Esophagus muscularis mucosa (tissue), 4 donors: ENCODE measurements at regions of chr3 and their contacts with region 1.

Region 1: GRCh38 chr3:177597311-177598096 is 400.2 kb upstream of the TBL1XR1 start:
- DNase-seq: no peak
- H3K4me3 ChIP-seq: no peak overlapping the region
- H3K27ac ChIP-seq: peak overlapping the region; percentile 66 to 83 (median 76)
- H3K4me1 ChIP-seq: peaks cover 33 to 78% (median 65%) of the 10 kb centered on the region in 4 donors
- H3K27me3 ChIP-seq: no peaks in the 10 kb centered on the region
- CTCF ChIP-seq: no peak
- EP300 ChIP-seq: no peak
- POLR2A ChIP-seq: no peak

Region 2: DNA sequence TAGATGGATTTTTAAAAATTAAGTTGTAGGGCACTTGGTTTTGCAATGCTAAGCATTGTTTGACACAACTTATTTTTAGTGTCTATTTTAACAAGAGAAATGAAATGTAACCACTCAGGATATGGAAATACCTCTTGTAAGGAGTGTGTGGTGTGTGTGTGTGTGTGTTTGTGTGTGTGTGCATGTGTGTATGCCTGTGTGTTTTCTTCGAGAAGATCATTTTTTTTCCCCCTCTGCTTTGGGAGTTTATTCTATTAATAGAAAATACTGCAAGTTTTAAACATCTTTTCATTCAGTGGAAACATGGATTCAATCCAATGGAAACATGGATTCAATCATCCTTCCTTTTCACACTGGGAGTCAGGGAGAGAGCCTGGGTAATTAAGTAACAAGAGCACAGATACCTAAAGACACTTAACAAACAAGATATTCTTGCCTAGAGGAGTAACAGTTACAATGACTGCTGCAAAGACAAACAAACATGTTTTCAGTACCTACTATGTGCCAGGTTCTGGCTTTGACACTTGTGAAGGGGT is 166.9 kb after region 1 on chr3:
- intact Hi-C with region 1: loop called (anchors 5 kb)
- DNase-seq: no peak
- H3K4me3 ChIP-seq: no peak overlapping the region
- H3K27ac ChIP-seq: peak overlapping the region; percentile 50 to 71 (median 68)
- H3K4me1 ChIP-seq: peaks cover 16 to 36% (median 28%) of the 10 kb centered on the region in 4 donors
- H3K27me3 ChIP-seq: no peaks in the 10 kb centered on the region
- CTCF ChIP-seq: no peak
- EP300 ChIP-seq: no peak
- POLR2A ChIP-seq: no peak

Region 3: DNA sequence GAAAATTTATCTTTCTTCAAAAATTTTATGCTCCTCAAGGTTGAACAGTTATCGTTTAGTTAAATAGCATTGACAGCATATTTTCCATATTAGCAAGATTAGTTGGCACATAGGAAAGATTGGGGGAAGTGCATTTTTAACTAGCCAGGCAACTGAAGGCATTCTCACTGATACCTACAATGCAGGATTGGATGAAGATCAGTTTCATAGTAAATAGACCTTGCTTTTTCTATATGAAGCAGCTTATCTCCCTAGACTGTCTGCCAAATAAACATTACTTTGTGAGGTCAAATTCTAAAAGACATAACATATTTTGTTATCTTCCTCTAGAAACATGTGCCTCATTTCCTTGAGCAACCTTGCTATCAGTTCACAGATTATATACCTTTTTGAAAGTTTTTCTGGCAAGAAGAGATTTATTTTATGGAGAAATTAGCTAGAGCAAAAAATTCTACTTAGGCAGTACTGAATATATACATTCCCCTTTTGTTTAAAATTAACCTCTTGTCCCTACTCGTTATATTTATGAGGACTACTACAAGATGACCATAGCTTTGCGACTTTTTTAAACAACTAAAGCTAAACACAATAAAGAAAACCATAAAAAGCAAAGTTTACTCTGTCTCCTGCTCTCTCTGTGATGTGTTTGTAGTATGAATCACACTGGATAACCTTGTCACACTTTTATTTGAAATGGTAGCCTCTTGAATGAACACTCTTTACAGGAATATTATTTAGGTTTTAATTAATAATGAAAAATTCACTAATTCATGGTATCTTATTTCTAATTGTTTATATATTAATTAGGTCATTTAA is 254.7 kb after region 1 on chr3:
- intact Hi-C with region 1: no loop called
- DNase-seq: no peak
- H3K4me3 ChIP-seq: no peak overlapping the region
- H3K27ac ChIP-seq: no peak overlapping the region
- H3K4me1 ChIP-seq: peaks cover 0 to 26% (median 19%) of the 10 kb centered on the region in 4 donors
- H3K27me3 ChIP-seq: no peaks in the 10 kb centered on the region
- CTCF ChIP-seq: no peak
- EP300 ChIP-seq: no peak
- POLR2A ChIP-seq: no peak

Region 4: GRCh38 chr3:178454726-178455125 is 857.2 kb after region 1 on chr3:
- intact Hi-C with region 1: no loop called
- DNase-seq: no peak
- H3K4me3 ChIP-seq: no peak overlapping the region
- H3K27ac ChIP-seq: no peak overlapping the region
- H3K4me1 ChIP-seq: peaks cover 0 to 22% (median 7%) of the 10 kb centered on the region in 4 donors
- H3K27me3 ChIP-seq: no peaks in the 10 kb centered on the region
- CTCF ChIP-seq: no peak
- EP300 ChIP-seq: no peak
- POLR2A ChIP-seq: no peak